MCF 10A (cell line): ENCODE measurements at regions of chr9 and their contacts with region 1.

Region 1: GRCh38 chr9:16335788-16336580 is 534.5 kb downstream of the BNC2 start:
- DNase-seq: peak; percentile 100
- H3K4me3 Mint-ChIP-seq: peak overlapping the region; percentile 35
- H3K27ac Mint-ChIP-seq: peak overlapping the region; percentile 82
- H3K4me1 Mint-ChIP-seq: peaks cover 34% of the 10 kb centered on the region
- H3K27me3 Mint-ChIP-seq: no peaks in the 10 kb centered on the region
- CTCF ChIP-seq: no peak

Region 2: GRCh38 chr9:16385590-16385989 is 49.6 kb after region 1 on chr9:
- CTCF ChIA-PET with region 1: no interaction called
- POLR2A ChIA-PET with region 1: no interaction called
- intact Hi-C with region 1: loop called (anchors 5 kb)
- DNase-seq: peak; percentile 82
- H3K4me3 Mint-ChIP-seq: no peak overlapping the region
- H3K27ac Mint-ChIP-seq: no peak overlapping the region
- H3K4me1 Mint-ChIP-seq: peaks cover 11% of the 10 kb centered on the region
- H3K27me3 Mint-ChIP-seq: no peaks in the 10 kb centered on the region
- CTCF ChIP-seq: no peak